B cell (primary cell): ENCODE measurements at regions of chr17 and their contacts with region 1.

Region 1: DNA sequence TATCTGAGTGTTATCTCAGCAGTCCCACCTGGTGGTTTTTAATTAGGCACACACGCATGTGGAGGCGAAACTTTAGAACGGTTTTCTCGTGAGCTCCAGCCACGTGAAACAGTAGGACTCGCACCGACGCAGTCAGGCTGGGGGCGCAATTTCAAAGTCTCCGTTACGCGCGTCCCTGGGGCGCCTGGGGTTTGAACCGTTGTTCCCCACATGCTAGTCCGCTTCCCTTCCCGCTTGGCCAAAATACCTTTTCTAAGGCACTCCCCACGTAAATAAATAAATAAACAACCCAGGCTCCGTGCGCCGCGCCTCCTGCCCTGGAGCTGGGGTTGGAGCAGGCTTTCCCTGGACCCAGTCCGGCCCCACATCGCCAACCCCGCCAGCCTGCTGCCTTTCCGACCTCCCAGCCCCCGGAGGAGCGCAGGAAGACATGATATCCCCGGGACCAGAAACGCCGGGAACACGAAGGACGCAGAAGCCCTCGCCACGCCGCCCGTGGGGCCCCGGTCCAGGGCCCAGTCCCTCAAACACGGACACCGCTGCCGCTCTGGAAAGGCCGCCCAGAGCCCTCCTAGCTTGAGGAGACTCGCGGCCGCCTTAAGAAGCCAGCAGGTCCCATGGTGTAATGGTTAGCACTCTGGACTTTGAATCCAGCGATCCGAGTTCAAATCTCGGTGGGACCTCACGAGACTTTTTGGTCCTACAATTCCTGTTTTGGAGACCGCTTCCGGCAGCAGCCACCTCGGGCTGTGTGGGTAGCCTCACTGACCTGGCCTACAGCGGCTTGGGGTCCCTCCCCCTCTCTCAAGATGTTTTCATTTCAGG is 18.2 kb downstream of the GNGT2 start:
- DNase-seq: peak; percentile 93
- ATAC-seq: peak; percentile 42
- H3K4me3 ChIP-seq: peak overlapping the region; percentile 76 to 95 (median 88)
- H3K4me3 Mint-ChIP-seq: peak overlapping the region; percentile 93
- H3K27ac ChIP-seq: peak overlapping the region; percentile 92 to 95
- H3K27ac Mint-ChIP-seq: peak overlapping the region; percentile 97
- H3K4me1 ChIP-seq: peaks cover 11 to 23% of the 10 kb centered on the region in 2 donors
- H3K4me1 Mint-ChIP-seq: peaks cover 32% of the 10 kb centered on the region
- H3K27me3 ChIP-seq: no peaks in the 10 kb centered on the region
- H3K27me3 Mint-ChIP-seq: no peaks in the 10 kb centered on the region
- CTCF ChIP-seq: peak; percentile 66

Region 2: GRCh38 chr17:48892940-48893645 is 299.0 kb before region 1 on chr17:
- CTCF ChIA-PET with region 1: no interaction called
- POLR2A ChIA-PET with region 1: no interaction called
- intact Hi-C with region 1: loop called (anchors 1 kb)
- DNase-seq: no peak
- ATAC-seq: no peak
- H3K4me3 ChIP-seq: peak overlapping the region; percentile 31 to 85 (median 75)
- H3K4me3 Mint-ChIP-seq: peak overlapping the region; percentile 95
- H3K27ac ChIP-seq: peak overlapping the region; percentile 88
- H3K27ac Mint-ChIP-seq: peak overlapping the region; percentile 93
- H3K4me1 ChIP-seq: peaks cover 17 to 23% of the 10 kb centered on the region in 2 donors
- H3K4me1 Mint-ChIP-seq: peaks cover 23% of the 10 kb centered on the region
- H3K27me3 ChIP-seq: no peaks in the 10 kb centered on the region
- H3K27me3 Mint-ChIP-seq: no peaks in the 10 kb centered on the region
- CTCF ChIP-seq: no peak

Region 3: DNA sequence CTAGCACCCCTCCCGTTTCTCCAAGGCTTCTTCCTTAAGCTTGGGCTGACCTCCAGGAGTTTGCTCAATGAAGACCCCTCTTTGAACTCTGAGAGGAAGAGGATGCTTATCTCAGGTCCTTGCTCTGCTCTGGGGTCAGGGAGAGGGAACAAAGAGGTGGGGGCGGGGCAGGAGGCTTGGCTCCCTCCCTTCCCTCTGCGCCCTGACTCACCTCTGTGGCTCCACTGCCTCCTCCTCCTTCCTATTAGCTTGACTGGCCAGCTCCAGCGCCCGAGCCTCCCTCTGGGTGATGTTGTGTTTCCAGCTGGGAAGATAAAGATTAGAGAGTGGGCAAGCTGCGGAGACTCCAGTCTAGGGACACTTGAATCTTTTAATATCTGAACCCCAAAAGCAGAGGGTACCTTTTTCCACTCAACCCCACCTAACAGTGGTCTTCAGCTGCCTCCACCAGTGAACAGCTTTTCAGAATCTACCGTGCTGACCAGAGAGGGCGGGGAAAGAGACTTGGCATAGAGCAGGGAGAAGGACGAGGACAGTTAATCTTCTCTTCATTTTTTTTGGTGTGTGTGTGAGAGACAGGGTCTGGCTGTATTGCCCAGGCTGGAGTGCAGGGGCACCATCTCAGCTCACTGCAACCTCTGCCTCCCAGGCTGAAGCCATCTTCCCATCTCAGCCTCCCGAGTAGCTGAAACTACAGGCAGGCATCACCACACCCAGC is 230.5 kb before region 1 on chr17:
- CTCF ChIA-PET with region 1: no interaction called
- POLR2A ChIA-PET with region 1: no interaction called
- intact Hi-C with region 1: no loop called
- DNase-seq: no peak
- ATAC-seq: no peak
- H3K4me3 ChIP-seq: no peak overlapping the region
- H3K4me3 Mint-ChIP-seq: no peak overlapping the region
- H3K27ac ChIP-seq: no peak overlapping the region
- H3K27ac Mint-ChIP-seq: no peak overlapping the region
- H3K4me1 ChIP-seq: no peaks in the 10 kb centered on the region
- H3K4me1 Mint-ChIP-seq: no peaks in the 10 kb centered on the region
- H3K27me3 ChIP-seq: peaks cover 0 to 29% (median 9%) of the 10 kb centered on the region in 4 experiments
- H3K27me3 Mint-ChIP-seq: peaks cover 33% of the 10 kb centered on the region
- CTCF ChIP-seq: no peak

Region 4: GRCh38 chr17:49022391-49022941 is 169.7 kb before region 1 on chr17:
- CTCF ChIA-PET with region 1: no interaction called
- POLR2A ChIA-PET with region 1: no interaction called
- intact Hi-C with region 1: no loop called
- DNase-seq: no peak
- ATAC-seq: no peak
- H3K4me3 ChIP-seq: no peak overlapping the region
- H3K4me3 Mint-ChIP-seq: no peak overlapping the region
- H3K27ac ChIP-seq: no peak overlapping the region
- H3K27ac Mint-ChIP-seq: no peak overlapping the region
- H3K4me1 ChIP-seq: no peaks in the 10 kb centered on the region
- H3K4me1 Mint-ChIP-seq: no peaks in the 10 kb centered on the region
- H3K27me3 ChIP-seq: peaks cover 0 to 8% (median 2%) of the 10 kb centered on the region in 4 experiments
- H3K27me3 Mint-ChIP-seq: peaks cover 22% of the 10 kb centered on the region
- CTCF ChIP-seq: no peak

Region 5: DNA sequence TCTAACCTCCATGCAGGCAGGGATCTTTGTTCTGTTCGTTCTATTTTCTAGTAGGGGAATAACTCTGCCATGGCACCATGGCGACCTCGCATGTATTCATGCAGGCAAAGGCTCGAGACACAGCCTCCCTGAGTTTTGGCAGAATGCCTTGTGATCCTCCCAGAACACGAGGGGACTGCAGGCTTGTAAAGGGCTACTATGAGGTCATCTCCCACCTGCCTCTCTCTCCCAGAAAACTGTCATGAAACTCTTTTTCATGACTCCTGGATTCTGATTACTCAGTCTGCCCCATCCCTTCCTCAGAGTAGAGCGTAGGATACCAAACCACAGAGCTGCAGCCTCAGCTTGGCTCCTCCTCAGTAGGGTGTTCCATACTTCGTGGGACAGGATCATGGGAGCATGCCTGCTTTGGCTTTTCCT is 130.6 kb before region 1 on chr17:
- CTCF ChIA-PET with region 1: no interaction called
- POLR2A ChIA-PET with region 1: no interaction called
- intact Hi-C with region 1: no loop called
- DNase-seq: no peak
- ATAC-seq: no peak
- H3K4me3 ChIP-seq: no peak overlapping the region
- H3K4me3 Mint-ChIP-seq: no peak overlapping the region
- H3K27ac ChIP-seq: no peak overlapping the region
- H3K27ac Mint-ChIP-seq: no peak overlapping the region
- H3K4me1 ChIP-seq: no peaks in the 10 kb centered on the region
- H3K4me1 Mint-ChIP-seq: no peaks in the 10 kb centered on the region
- H3K27me3 ChIP-seq: no peaks in the 10 kb centered on the region
- H3K27me3 Mint-ChIP-seq: peaks cover 13% of the 10 kb centered on the region
- CTCF ChIP-seq: no peak

Region 6: GRCh38 chr17:49180303-49180702 is 11.8 kb before region 1 on chr17:
- CTCF ChIA-PET with region 1: interaction called, 17 read pairs
- POLR2A ChIA-PET with region 1: interaction called, 6 read pairs
- intact Hi-C with region 1: no loop called
- DNase-seq: peak; percentile 77
- ATAC-seq: peak; percentile 53
- H3K4me3 ChIP-seq: no peak overlapping the region
- H3K4me3 Mint-ChIP-seq: no peak overlapping the region
- H3K27ac ChIP-seq: no peak overlapping the region
- H3K27ac Mint-ChIP-seq: no peak overlapping the region
- H3K4me1 ChIP-seq: peaks cover 0 to 4% of the 10 kb centered on the region in 2 donors
- H3K4me1 Mint-ChIP-seq: peaks cover 2% of the 10 kb centered on the region
- H3K27me3 ChIP-seq: peaks cover 0 to 8% (median 3%) of the 10 kb centered on the region in 4 experiments
- H3K27me3 Mint-ChIP-seq: peaks cover 4% of the 10 kb centered on the region
- CTCF ChIP-seq: peak; percentile 86

Region 7: DNA sequence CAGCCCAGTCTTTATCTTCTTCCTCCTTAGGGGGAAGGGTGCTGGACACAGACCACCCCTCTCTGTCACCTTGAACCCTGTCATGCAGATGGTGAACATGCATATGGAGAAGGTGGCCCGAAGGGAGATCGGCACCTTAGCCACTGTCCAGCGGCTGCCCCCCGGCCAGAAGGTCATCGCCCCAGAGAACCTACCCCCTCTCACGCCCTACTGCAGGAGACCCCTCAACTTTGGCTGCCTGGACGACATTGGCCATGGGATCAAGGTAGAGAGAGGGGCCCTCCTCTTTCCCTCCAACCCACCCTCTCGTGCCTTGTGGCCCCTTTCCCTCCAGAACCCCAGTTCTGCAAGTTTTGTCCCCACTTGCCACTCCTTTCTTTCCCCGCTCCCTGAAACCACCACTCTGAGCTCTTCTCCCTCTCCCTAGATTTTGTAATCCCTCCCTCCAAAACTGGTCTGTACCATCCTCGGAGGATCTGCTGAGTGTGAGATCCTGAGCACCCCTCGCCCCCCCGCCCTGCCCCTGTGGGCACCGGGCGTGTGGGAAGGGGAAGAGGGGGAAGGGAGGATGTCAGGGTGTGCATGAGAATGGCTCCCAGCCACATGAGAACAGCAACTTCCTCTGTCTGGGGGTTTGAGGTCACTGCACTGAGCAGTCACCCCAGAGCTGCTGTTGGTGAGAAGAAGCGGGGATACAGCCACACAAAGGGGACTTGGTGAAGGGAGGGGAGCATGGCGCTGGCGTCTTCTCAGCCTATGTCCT is 25.7 kb after region 1 on chr17:
- CTCF ChIA-PET with region 1: interaction called, 36 read pairs
- POLR2A ChIA-PET with region 1: interaction called, 45 read pairs
- intact Hi-C with region 1: loop called (anchors 1 kb)
- DNase-seq: peak; percentile 85
- ATAC-seq: peak; percentile 52
- H3K4me3 ChIP-seq: peak overlapping the region in 3 of 5 experiments; percentile 3 to 42 (median 11)
- H3K4me3 Mint-ChIP-seq: peak overlapping the region; percentile 88
- H3K27ac ChIP-seq: peak overlapping the region; percentile 90 to 93
- H3K27ac Mint-ChIP-seq: peak overlapping the region; percentile 97
- H3K4me1 ChIP-seq: peaks cover 73 to 79% of the 10 kb centered on the region in 2 donors
- H3K4me1 Mint-ChIP-seq: peaks cover 66% of the 10 kb centered on the region
- H3K27me3 ChIP-seq: no peaks in the 10 kb centered on the region
- H3K27me3 Mint-ChIP-seq: no peaks in the 10 kb centered on the region
- CTCF ChIP-seq: no peak

Region 8: GRCh38 chr17:49361902-49362722 is 170.0 kb after region 1 on chr17 and contains the start of gene ZNF652:
- CTCF ChIA-PET with region 1: interaction called, 3 read pairs
- POLR2A ChIA-PET with region 1: interaction called, 5 read pairs
- intact Hi-C with region 1: loop called (anchors 1 kb)
- DNase-seq: peak; percentile 98
- ATAC-seq: peak; percentile 69
- H3K4me3 ChIP-seq: peak within 1 kb of the TSS; percentile 79 to 95 (median 89)
- H3K4me3 Mint-ChIP-seq: peak within 1 kb of the TSS; percentile 99
- H3K27ac ChIP-seq: peak within 1 kb of the TSS; percentile 70 to 76
- H3K27ac Mint-ChIP-seq: peak within 1 kb of the TSS; percentile 98
- H3K4me1 ChIP-seq: peaks cover 50% of the 10 kb centered on the region in 2 donors
- H3K4me1 Mint-ChIP-seq: peaks cover 62% of the 10 kb centered on the region
- H3K27me3 ChIP-seq: no peaks in the 10 kb centered on the region
- H3K27me3 Mint-ChIP-seq: no peaks in the 10 kb centered on the region
- CTCF ChIP-seq: no peak
- total RNA-seq, gene ZNF652: 82.4 and 86.2 TPM in 2 replicates

Region 9: GRCh38 chr17:49603720-49604119 is 411.6 kb after region 1 on chr17:
- CTCF ChIA-PET with region 1: no interaction called
- POLR2A ChIA-PET with region 1: no interaction called
- intact Hi-C with region 1: no loop called
- DNase-seq: no peak
- ATAC-seq: no peak
- H3K4me3 ChIP-seq: no peak overlapping the region
- H3K4me3 Mint-ChIP-seq: no peak overlapping the region
- H3K27ac ChIP-seq: no peak overlapping the region
- H3K27ac Mint-ChIP-seq: no peak overlapping the region
- H3K4me1 ChIP-seq: no peaks in the 10 kb centered on the region
- H3K4me1 Mint-ChIP-seq: no peaks in the 10 kb centered on the region
- H3K27me3 ChIP-seq: no peaks in the 10 kb centered on the region
- H3K27me3 Mint-ChIP-seq: no peaks in the 10 kb centered on the region
- CTCF ChIP-seq: no peak